Dendritic cell treated with granulocyte-macrophage colony-stimulating factor and Interleukin-4, amounts not matched to agents 40 ng/mL and 50 ng/mL, for 4 days (primary cell): ENCODE measurements at regions of chr4 and their contacts with region 1.

Region 1: DNA sequence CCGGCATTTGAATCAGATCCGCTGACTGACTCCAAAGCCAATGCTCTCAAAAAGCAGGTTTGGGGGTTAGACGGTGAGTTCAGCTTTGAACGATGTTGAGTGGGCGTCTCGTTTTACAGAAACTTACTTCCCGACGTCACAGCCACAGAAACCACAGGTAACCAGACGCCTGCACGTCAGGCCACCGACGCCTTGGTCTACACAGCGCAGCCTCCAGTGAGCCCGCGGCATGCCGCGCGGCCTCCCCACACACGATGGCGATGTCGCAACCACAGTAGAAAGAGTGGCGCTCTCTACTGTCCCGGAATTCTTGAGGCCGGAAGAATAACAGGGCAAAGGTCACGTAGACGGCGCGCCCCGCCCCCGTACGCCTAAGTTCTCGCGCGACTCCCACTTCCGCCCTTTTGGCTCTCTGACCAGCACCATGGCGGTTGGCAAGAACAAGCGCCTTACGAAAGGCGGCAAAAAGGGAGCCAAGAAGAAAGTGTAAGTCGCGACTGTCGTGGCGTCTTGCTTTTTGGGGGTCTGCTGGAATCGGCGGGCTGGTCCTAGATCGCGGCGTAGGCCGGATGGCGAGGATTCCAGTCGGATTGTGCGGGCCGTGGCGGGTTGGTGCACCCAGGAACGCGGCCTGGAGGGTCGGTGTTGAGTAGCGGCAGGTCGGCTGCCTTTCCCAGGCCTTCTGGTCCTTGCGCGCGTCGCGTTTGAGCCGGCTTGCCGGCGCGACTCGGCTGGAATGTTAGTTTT is at the start of gene RPS3A:
- H3K4me3 Mint-ChIP-seq: peak within 1 kb of the TSS; percentile 88
- H3K27ac Mint-ChIP-seq: peak within 1 kb of the TSS; percentile 94
- H3K4me1 Mint-ChIP-seq: peaks cover 48% of the 10 kb centered on the region
- H3K27me3 Mint-ChIP-seq: no peaks in the 10 kb centered on the region

Region 2: DNA sequence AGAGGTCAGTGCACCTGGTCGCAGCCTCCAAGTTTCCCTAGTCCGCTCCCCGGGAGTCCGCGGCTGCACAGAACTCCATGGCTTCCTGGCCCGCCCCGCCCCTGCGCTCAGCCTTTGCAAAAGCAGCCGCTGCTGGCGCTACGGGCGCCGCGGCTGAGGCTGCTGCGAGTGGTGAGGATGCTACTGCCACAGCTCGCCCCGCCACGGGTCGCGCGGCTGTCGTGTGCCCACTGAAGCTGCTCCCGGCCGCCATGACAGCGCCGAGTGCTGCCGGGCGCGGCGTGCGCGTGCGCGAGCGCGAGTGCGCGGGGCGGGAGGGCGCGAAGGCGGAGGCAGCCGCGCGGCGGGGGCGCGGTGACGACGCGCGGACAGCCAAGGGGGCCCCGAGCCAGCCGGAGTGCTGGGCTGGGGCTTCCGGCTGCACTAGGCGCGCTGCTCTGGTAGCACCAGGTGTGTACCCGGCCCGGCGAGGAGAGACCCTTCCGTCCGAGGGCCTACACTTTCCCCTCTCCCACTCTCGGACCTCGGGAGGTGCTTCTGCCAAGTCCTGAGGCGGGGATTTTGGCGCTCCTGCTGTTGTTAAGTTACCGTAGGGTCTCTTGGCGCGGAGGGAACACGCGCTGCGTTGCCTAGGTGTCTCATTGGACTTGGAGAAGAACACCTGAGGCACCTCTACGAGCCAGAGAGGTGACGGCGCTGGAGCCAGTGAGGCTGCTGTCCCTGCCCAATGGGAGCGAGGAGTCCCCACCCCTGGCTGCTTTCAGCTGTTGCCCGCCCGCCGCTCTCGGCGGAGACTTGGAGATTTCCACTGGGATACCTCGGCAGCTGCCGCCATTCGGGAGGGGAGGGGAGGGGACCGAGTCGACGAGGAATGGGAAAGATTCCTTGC is 83.7 kb before region 1 on chr4:
- intact Hi-C with region 1: loop called (anchors 5 kb)
- H3K4me3 Mint-ChIP-seq: peak overlapping the region; percentile 100
- H3K27ac Mint-ChIP-seq: peak overlapping the region; percentile 92
- H3K4me1 Mint-ChIP-seq: peaks cover 24% of the 10 kb centered on the region
- H3K27me3 Mint-ChIP-seq: peaks cover 5% of the 10 kb centered on the region

Region 3: DNA sequence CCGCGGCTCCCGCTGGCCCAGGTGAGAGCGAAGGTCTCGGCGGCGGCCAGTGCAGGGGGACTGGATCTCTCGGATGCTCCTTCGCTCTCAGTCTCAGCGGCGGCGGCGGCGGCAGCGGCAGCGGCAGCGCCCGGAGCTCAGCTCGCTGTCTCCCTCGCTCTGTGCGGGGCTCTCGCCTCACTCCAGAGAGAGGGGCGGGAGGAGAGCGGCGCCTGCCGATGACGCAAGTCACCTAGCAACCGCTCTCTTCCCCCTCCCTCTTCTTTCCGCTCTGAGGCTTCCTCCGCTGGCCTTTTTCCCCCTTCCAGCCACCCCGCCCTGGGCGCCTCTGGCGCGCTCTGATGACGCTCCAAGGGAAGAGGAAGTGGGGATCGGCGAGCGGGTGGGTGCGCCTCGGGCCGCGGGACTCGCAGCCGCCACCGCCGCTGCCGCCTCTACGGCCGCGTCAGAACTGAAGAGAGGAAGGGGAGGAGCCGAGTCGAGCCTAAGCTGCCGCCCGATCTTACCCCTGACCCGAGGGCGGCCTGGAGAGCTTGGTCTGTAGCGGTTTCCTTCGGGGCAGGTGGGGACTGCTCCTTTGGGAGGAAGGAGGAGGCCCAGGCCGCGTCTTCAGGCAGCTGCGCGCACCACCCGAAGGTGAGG is 1436.6 kb after region 1 on chr4 and contains the start of gene FBXW7:
- intact Hi-C with region 1: loop called (anchors 5 kb)
- H3K4me3 Mint-ChIP-seq: peak within 1 kb of the TSS; percentile 100
- H3K27ac Mint-ChIP-seq: peak within 1 kb of the TSS; percentile 92
- H3K4me1 Mint-ChIP-seq: peaks cover 56% of the 10 kb centered on the region
- H3K27me3 Mint-ChIP-seq: no peaks in the 10 kb centered on the region